A673 (cell line): ENCODE measurements at regions of chr15 and their contacts with region 1.

Region 1: GRCh38 chr15:35444557-35445204 is 101.3 kb downstream of the DPH6 start:
- DNase-seq: peak; percentile 62
- H3K4me3 ChIP-seq: no peak overlapping the region
- H3K27ac ChIP-seq: no peak overlapping the region
- H3K4me1 ChIP-seq: peaks cover under 1% of the 10 kb centered on the region
- H3K27me3 ChIP-seq: no peaks in the 10 kb centered on the region
- CTCF ChIP-seq: peak; percentile 88

Region 2: GRCh38 chr15:35078221-35078915 is 366.3 kb before region 1 on chr15:
- CTCF ChIA-PET with region 1: interaction called, 12 read pairs
- POLR2A ChIA-PET with region 1: no interaction called
- intact Hi-C with region 1: loop called (anchors 1 kb)
- DNase-seq: peak; percentile 69
- H3K4me3 ChIP-seq: no peak overlapping the region
- H3K27ac ChIP-seq: no peak overlapping the region
- H3K4me1 ChIP-seq: no peaks in the 10 kb centered on the region
- H3K27me3 ChIP-seq: no peaks in the 10 kb centered on the region
- CTCF ChIP-seq: peak; percentile 85

Region 3: GRCh38 chr15:35181538-35181937 is 263.1 kb before region 1 on chr15:
- CTCF ChIA-PET with region 1: no interaction called
- POLR2A ChIA-PET with region 1: no interaction called
- intact Hi-C with region 1: loop called (anchors 10 kb)
- DNase-seq: no peak
- H3K4me3 ChIP-seq: no peak overlapping the region
- H3K27ac ChIP-seq: no peak overlapping the region
- H3K4me1 ChIP-seq: peaks cover 18% of the 10 kb centered on the region
- H3K27me3 ChIP-seq: no peaks in the 10 kb centered on the region
- CTCF ChIP-seq: no peak

Region 4: GRCh38 chr15:35289024-35289617 is 155.6 kb before region 1 on chr15:
- CTCF ChIA-PET with region 1: interaction called, 68 read pairs
- POLR2A ChIA-PET with region 1: no interaction called
- intact Hi-C with region 1: loop called (anchors 1 kb)
- DNase-seq: peak; percentile 69
- H3K4me3 ChIP-seq: no peak overlapping the region
- H3K27ac ChIP-seq: no peak overlapping the region
- H3K4me1 ChIP-seq: peaks cover 9% of the 10 kb centered on the region
- H3K27me3 ChIP-seq: no peaks in the 10 kb centered on the region
- CTCF ChIP-seq: peak; percentile 84